MCF 10A (cell line): ENCODE measurements at regions of chr6 and their contacts with region 1.

Region 1: DNA sequence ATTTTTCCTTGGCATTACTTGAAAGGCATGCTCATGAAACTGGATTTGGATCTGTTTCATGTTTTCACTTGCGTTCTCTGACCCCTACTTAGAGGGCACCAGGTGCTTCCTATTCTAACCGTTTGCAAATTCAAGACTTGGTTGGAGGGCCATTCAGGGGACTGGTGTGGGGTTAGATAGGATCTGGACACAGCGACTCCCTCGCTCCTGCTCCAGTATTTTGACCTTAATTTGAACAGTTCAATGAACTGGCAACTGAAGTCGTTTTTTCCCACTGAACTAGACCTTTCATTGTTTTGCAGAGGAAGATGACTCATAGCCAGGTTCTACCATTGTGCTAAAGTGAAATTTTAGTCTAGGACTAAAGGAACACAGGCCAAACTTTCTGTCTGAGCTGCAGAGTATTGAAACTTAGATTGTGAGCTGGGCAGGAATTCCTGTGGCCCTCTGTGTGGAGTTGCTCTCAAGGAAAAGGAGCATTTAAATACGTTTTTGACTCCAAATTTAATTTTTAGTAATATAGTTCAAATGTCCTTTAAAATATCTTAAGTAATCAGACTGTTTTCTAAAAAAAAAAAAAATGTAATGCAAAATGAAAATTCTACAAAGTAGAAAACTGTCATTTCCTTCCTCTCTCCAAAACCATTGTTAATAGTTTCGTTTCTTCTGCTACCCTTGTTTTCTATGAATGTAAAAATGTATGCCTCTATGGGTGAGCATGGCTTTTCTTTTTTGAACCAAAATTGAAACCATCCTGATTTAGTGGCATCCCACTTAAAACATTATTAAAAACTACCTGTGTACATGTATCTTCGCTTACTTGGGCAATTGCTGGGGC is 64.8 kb downstream of the UTRN start:
- DNase-seq: peak; percentile 81
- H3K4me3 Mint-ChIP-seq: peak overlapping the region; percentile 7
- H3K27ac Mint-ChIP-seq: peak overlapping the region; percentile 37
- H3K4me1 Mint-ChIP-seq: peaks cover 35% of the 10 kb centered on the region
- H3K27me3 Mint-ChIP-seq: no peaks in the 10 kb centered on the region
- CTCF ChIP-seq: no peak

Region 2: DNA sequence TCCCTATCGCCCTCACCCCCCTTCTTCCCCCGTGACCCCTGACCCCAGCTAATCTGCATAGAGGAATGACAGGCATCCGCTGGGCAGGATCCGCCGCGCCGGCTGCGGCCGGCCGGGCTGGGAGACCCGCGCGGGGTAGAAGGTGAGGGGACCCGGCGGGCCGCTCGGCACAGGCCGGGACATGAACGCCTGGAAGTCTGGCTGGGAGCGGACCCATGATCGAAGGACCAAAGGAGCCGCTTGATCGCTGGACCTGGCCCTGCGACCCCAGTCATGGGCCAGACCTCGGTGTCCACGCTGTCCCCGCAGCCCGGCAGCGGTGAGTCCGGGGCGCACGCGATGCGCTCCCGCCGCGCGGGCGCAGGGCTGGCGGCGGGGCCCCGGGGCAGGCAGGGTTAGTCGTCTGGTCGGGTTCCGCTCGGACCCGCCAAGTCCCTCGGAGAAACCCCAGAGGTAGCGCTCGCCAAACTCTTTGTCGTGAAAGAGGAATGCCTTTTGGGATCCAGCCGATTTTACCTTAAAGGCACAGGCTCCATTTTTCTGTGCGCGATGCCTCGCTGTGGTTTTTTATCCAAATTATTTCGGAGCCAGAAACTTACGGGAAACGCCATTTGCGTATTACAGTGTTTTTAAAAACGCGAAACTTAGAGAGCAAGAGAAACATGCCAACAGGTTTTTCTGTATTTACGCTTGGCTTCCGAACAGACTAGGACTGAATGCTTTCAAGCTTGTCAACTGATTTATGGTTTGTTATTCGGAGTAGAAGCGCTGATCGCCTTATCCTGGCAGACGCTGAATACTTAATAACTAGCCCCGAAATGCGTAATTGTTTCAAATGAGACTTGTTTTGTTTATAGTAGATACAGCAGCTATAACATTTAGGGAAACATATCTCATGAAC is 671.8 kb before region 1 on chr6 and contains the start of gene PHACTR2:
- CTCF ChIA-PET with region 1: no interaction called
- POLR2A ChIA-PET with region 1: no interaction called
- intact Hi-C with region 1: no loop called
- DNase-seq: peak; percentile 75
- H3K4me3 Mint-ChIP-seq: peak within 1 kb of the TSS; percentile 88
- H3K27ac Mint-ChIP-seq: peak within 1 kb of the TSS; percentile 87
- H3K4me1 Mint-ChIP-seq: peaks cover 51% of the 10 kb centered on the region
- H3K27me3 Mint-ChIP-seq: no peaks in the 10 kb centered on the region
- CTCF ChIP-seq: no peak
- total RNA-seq, gene PHACTR2: 30.0 and 34.4 TPM in 2 replicates

Region 3: DNA sequence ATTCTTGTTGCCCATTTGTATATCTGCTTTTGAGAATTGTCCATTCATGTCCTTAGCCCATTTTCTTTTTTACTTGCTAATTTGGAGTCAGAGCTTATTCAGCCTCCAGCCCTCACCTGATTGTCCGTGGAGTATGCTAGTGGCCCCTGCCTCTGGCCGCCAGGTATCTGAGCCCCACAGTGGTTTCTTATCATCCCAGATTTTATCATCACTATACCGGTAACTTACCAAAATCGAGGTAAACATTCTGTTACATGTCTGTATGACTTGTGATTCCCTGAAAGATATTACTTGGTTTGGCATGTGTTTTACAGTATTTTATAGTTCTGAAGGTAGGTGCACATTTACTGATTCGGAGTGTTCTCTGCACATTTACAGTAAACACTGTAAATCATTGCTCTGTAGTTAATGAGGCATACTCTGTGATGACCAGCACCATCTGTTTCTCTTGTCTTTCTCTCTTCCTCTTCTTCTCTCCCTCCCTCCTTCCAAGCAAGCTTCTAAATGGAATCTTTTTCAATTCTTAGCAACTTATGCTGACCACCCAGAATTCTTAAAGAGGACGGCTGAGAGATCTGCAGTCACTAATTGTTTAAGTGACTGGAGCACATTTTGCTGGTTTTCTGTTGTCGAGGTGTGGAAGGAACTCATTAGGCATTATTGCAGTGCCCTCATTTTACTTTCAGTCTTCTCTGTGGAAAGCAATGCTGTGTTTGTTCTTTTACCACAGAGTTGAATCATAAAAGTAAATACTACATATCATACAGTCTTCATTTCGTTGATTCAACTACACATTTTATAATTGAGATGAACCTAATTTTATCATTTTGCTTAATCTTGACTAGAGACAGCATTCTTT is 61.7 kb after region 1 on chr6:
- CTCF ChIA-PET with region 1: no interaction called
- POLR2A ChIA-PET with region 1: no interaction called
- intact Hi-C with region 1: loop called (anchors 10 kb)
- DNase-seq: no peak
- H3K4me3 Mint-ChIP-seq: no peak overlapping the region
- H3K27ac Mint-ChIP-seq: no peak overlapping the region
- H3K4me1 Mint-ChIP-seq: peaks cover 32% of the 10 kb centered on the region
- H3K27me3 Mint-ChIP-seq: no peaks in the 10 kb centered on the region
- CTCF ChIP-seq: no peak

Region 4: DNA sequence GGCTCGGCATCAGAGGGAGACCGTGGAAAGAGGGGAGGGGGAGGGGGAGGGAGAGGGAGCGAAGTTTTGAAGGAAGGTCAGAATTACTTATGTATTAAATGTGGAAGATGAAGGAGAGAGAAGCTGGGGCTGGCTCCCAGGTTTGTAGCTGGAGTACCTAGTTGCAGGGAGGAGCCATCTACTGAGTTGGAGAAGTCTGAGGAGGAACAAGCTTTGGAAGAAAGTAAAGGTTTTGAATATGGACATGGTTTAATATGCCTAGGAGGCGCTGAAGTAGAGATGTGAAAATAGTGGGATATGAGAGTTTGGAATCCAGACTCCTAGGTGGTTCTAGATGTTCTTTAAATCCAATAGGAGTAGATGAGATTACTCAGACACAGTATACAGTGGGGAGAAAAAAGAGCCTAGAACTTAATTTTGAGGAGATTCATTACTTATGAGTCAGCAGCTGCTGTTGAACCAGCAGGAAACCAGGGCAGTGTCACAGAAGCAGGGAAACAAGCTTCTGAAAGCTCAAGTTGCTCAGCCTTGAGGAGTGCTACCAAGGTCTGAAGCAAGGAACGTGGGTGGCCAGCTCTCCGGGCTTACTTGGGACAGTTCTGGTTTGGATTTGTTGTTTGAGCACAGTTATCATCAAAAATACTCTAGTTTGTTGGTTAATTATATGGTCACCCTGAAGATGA is 84.5 kb after region 1 on chr6:
- CTCF ChIA-PET with region 1: no interaction called
- POLR2A ChIA-PET with region 1: no interaction called
- intact Hi-C with region 1: no loop called
- DNase-seq: peak; percentile 55
- H3K4me3 Mint-ChIP-seq: no peak overlapping the region
- H3K27ac Mint-ChIP-seq: no peak overlapping the region
- H3K4me1 Mint-ChIP-seq: peaks cover 11% of the 10 kb centered on the region
- H3K27me3 Mint-ChIP-seq: no peaks in the 10 kb centered on the region
- CTCF ChIP-seq: no peak